PC-3 (cell line): ENCODE measurements at regions of chr3 and their contacts with region 1.

Region 1: DNA sequence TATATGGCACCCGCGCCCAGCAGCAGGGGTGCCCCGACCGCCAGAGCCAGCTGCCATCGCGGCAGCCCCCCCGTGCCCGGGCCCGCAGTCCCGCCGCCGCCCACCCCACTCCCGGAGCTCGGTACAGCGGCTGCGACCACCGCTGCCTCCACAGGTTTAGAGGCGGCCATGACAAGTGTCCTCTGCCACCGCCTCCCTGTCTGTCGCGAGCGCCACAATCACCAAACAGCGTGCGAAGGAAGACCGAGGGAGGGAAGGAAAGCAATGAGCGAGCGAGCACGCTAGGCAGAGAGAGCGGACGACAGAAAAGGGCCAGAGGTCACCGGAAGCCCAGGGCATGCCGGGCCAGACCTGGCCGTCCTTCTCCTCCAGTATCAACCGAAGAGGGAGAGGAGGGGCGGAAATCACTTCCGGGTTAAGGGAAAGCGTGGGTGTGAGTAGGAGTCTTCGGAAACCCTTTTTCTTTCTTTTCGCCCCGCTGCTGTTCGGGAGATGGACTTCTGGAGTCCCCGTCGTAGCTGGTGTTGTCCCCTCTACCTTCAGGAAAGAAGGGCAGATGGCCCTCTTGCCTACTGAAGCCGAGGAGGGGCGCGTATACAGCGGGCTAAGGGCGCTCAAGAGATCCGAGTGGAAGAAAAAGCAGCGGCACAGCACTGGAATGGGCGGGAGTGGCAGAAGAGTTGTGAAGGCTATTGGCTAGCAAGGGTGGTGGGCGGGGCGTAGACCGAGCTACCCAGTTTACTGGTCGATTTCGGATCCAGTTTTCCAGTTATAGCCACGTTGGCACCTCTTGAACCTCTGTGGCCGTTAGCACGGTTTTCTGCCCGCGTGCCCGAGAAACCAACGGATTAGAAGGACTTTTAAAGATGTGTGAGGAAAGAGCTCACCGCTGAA is at the starts of genes LNP1 and TOMM70:
- DNase-seq: peak; percentile 98
- ATAC-seq: peak; percentile 92
- H3K4me3 ChIP-seq: peak within 1 kb of the TSS; percentile 94
- H3K27ac ChIP-seq: peak within 1 kb of the TSS; percentile 78
- H3K4me1 ChIP-seq: peaks cover 30% of the 10 kb centered on the region
- H3K27me3 ChIP-seq: no peaks in the 10 kb centered on the region
- CTCF ChIP-seq: no peak
- total RNA-seq, gene LNP1: 5.2 and 6.8 TPM in 2 replicates
- total RNA-seq, gene TOMM70: 85.3 and 91.7 TPM in 2 replicates

Region 2: DNA sequence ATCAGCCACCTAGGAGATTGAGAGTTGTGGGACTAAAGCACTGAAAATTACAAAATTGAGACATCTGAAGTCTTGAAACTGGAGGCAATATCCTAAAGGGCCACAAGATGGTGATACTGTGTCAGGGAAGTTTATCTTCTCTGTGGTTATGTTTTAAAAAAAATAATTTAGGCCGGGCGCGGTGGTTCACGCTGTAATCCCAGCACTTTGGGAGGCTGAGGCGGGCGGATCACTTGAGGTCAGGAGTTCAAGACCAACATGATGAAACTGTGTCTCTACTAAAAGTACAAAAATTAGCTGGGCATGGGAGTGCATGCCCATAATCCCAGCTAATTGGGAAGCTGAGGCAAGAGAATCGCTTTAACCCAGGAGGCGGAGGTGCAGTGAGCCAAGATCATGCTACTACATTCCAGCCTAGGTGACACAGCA is 84.4 kb before region 1 on chr3:
- CTCF ChIA-PET with region 1: no interaction called
- POLR2A ChIA-PET with region 1: interaction called, 6 read pairs
- intact Hi-C with region 1: loop called (anchors 1 kb)
- DNase-seq: peak; percentile 77
- ATAC-seq: peak; percentile 80
- H3K4me3 ChIP-seq: no peak overlapping the region
- H3K27ac ChIP-seq: no peak overlapping the region
- H3K4me1 ChIP-seq: no peaks in the 10 kb centered on the region; the same call in 1 of the 2 replicates
- H3K27me3 ChIP-seq: no peaks in the 10 kb centered on the region
- CTCF ChIP-seq: peak; percentile 75

Region 3: GRCh38 chr3:100412912-100413590 is 12.0 kb after region 1 on chr3:
- CTCF ChIA-PET with region 1: no interaction called
- POLR2A ChIA-PET with region 1: interaction called, 13 read pairs
- intact Hi-C with region 1: no loop called
- DNase-seq: no peak
- ATAC-seq: no peak
- H3K4me3 ChIP-seq: no peak overlapping the region
- H3K27ac ChIP-seq: no peak overlapping the region
- H3K4me1 ChIP-seq: no peaks in the 10 kb centered on the region
- H3K27me3 ChIP-seq: no peaks in the 10 kb centered on the region
- CTCF ChIP-seq: no peak

Region 4: DNA sequence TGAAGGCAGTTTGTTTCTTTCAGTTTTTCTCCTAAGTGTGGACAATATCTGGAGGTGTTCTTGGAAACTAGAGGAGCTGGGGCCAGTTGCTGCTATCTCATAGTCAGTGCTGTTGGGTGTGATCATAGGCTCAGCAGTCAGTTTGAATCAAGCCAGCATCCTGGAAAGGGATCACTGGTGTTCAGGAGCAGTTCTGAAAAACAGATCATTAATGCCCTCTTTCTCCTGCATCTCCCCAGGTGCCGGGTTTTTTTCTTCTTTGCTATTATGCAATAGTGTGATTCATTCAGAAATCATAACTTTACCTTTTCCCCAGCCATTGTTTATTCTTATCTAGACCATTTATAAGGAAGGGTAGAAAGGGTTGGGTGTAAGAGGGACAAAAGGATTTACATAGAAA is 24.3 kb after region 1 on chr3:
- CTCF ChIA-PET with region 1: no interaction called
- POLR2A ChIA-PET with region 1: no interaction called
- intact Hi-C with region 1: loop called (anchors 1 kb)
- DNase-seq: peak; percentile 89
- ATAC-seq: peak; percentile 87
- H3K4me3 ChIP-seq: no peak overlapping the region
- H3K27ac ChIP-seq: peak overlapping the region; percentile 43
- H3K4me1 ChIP-seq: peaks cover 18% of the 10 kb centered on the region
- H3K27me3 ChIP-seq: no peaks in the 10 kb centered on the region
- CTCF ChIP-seq: no peak

Region 5: GRCh38 chr3:100437721-100438622 is 36.9 kb after region 1 on chr3:
- CTCF ChIA-PET with region 1: no interaction called
- POLR2A ChIA-PET with region 1: interaction called, 10 read pairs
- intact Hi-C with region 1: loop called (anchors 2 kb)
- DNase-seq: peak; percentile 86
- ATAC-seq: peak; percentile 72
- H3K4me3 ChIP-seq: peak overlapping the region; percentile 22; the same call in 1 of the 2 replicates
- H3K27ac ChIP-seq: peak overlapping the region; percentile 96
- H3K4me1 ChIP-seq: peaks cover 47% of the 10 kb centered on the region
- H3K27me3 ChIP-seq: no peaks in the 10 kb centered on the region
- CTCF ChIP-seq: no peak

Region 6: DNA sequence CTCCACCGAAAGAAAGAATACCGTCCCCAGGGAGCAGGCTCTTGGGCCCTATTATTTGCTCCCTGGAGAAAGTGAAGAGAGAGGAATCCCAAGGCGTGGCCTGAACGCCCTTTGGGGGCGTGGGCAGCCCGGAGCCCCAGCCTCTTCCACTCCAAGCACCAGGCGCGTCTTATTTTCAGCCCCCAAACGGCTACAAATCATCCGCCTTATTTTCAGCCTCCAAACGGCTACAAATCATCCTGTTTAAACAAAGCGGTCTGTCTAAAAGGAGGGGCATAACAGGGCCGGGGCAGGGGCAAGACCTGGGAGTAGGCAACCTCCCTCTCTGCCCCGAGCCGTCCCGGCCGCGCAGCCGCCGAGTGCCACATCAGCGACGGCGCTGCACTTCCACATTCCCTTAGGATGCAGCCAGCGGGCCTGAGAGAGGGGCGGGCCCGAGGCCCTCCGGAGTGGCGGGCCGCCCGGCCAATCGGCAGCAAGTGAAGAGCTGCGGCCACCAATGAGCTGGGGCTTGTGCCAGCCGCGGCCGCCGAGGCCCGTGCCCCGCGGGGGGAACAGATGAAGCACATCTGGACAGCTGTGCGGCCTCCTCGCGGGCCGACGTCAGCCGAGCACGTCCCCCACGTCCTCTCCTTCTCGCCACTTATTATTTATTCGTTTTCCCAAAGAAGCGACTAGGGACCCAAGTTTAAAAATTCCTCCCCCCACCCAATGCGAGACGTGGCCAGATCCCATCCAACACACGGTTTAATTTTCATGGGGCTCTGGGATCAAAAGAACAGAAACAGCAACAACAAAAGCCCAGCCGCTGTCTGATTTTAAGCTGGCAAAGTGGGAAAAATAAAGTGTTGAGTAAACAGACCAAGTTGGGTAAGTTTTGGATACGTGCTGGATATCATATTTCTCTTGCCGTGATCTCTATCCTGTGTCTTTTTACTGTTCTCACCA is 91.3 kb after region 1 on chr3 and contains the start of gene TMEM45A:
- CTCF ChIA-PET with region 1: no interaction called
- POLR2A ChIA-PET with region 1: interaction called, 13 read pairs
- intact Hi-C with region 1: no loop called
- DNase-seq: peak; percentile 98
- ATAC-seq: peak; percentile 97
- H3K4me3 ChIP-seq: peak within 1 kb of the TSS; percentile 79
- H3K27ac ChIP-seq: peak within 1 kb of the TSS; percentile 38; the same call in 1 of the 2 replicates
- H3K4me1 ChIP-seq: peaks cover 29% of the 10 kb centered on the region
- H3K27me3 ChIP-seq: no peaks in the 10 kb centered on the region
- CTCF ChIP-seq: no peak
- total RNA-seq, gene TMEM45A: 7.6 and 9.4 TPM in 2 replicates

Region 7: DNA sequence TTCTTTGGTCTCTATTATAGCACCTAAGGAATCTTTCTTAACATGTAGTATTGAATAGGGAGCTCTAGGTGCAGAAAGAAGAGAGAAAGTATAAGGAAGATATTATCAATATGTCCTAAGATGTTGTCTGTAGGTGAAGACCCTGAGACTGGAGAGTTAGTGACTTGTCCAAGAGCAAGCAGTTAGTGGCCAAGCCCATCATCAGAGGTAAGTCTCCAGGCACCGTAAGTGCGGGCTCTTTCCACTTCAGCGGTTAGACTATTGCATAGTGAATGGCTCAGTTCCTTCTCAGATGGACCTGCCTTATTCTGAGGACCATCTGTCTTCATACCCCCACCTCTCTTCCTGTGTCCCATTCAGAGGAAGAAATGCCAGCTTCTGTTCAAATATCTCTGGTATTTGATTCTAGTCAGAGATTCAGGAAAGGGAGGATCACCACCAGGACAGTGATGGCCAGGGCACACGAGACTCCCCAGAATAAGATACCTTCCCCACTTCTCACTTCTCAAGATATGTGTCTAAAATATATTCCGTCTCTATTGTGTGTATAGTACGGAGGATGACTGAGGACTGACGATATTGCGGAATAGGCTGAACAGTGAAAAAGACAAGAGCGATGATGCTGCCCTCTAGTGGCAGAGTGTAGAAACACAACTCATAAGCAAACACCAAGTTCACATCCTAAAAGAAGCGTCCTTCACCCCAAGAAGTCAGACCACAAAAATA is 189.2 kb after region 1 on chr3:
- CTCF ChIA-PET with region 1: no interaction called
- POLR2A ChIA-PET with region 1: no interaction called
- intact Hi-C with region 1: loop called (anchors 2 kb)
- DNase-seq: peak; percentile 87
- ATAC-seq: peak; percentile 82
- H3K4me3 ChIP-seq: 0 out of 2 replicates have a peak overlapping the region, but pooled peaks have one; percentile 24
- H3K27ac ChIP-seq: no peak overlapping the region
- H3K4me1 ChIP-seq: peaks cover 19% of the 10 kb centered on the region
- H3K27me3 ChIP-seq: no peaks in the 10 kb centered on the region
- CTCF ChIP-seq: peak; percentile 96